Activated CD8-positive, alpha-beta T cell treated with anti-CD3 and anti-CD28 coated beads, Interleukin-2, amount 10 ng/mL, durations not matched to agents 7 days and 5 days (primary cell): ENCODE measurements at regions of chr11 and their contacts with region 1.

Region 1: GRCh38 chr11:19071255-19071654 is 10.7 kb upstream of the MRGPRX2 start:
- DNase-seq: peak; percentile 69
- ATAC-seq: peak; percentile 95
- H3K4me3 Mint-ChIP-seq: no peak overlapping the region
- H3K27ac Mint-ChIP-seq: no peak overlapping the region
- H3K4me1 Mint-ChIP-seq: no peaks in the 10 kb centered on the region
- H3K27me3 Mint-ChIP-seq: peaks cover 19% of the 10 kb centered on the region

Region 2: GRCh38 chr11:19060629-19061028 is 10.6 kb before region 1 on chr11 and contains the start of gene MRGPRX2:
- CTCF ChIA-PET with region 1: interaction called, 25 read pairs
- POLR2A ChIA-PET with region 1: no interaction called
- DNase-seq: no peak
- ATAC-seq: peak; percentile 61
- H3K4me3 Mint-ChIP-seq: no peak within 1 kb of the TSS
- H3K27ac Mint-ChIP-seq: no peak within 1 kb of the TSS
- H3K4me1 Mint-ChIP-seq: peaks cover 13% of the 10 kb centered on the region
- H3K27me3 Mint-ChIP-seq: peaks cover 16% of the 10 kb centered on the region
- total RNA-seq, gene MRGPRX2: not detected

Region 3: DNA sequence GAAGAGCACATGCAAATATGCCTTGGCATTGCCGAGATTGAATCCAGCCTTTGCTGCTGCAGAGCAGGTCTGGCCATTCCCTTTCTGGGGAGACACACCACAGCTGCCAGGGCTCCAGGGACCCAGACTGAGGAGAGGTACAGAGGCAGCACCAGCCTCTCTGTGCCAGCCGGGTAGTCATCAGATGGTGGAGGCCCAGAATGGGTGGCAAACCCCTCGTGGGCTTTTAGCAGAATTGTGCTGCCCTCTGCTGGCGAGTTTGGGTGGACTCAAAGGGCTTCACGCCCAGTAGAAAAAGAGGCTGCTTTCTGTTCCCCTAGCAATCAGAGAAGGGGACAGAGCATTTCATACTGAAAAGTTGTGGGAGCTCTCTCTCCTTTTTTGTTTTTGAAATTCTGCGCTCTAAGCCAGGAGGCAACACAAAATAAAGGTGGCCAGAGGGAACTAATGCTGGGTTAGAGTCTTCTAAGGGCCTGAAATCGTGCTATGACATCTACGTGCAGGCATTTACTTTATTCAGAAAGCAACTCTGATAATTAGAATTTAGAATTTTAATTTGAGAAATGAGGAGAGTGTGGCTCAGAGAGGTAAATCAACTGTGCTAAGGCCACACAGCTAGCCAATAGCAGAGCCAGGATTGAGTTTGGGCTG is 482.6 kb after region 1 on chr11:
- CTCF ChIA-PET with region 1: interaction called, 15 read pairs
- POLR2A ChIA-PET with region 1: no interaction called
- DNase-seq: peak; percentile 76
- ATAC-seq: peak; percentile 76
- H3K4me3 Mint-ChIP-seq: no peak overlapping the region
- H3K27ac Mint-ChIP-seq: no peak overlapping the region
- H3K4me1 Mint-ChIP-seq: no peaks in the 10 kb centered on the region
- H3K27me3 Mint-ChIP-seq: peaks cover 2% of the 10 kb centered on the region